Ovary (tissue), 10 donors: ENCODE measurements at regions of chr11 and their contacts with region 1.

Region 1: GRCh38 chr11:27158722-27159679 is 118.4 kb downstream of the BBOX1 start:
- DNase-seq: peak; percentile 25 to 70 (median 45)
- H3K4me3 ChIP-seq: no peak overlapping the region
- H3K27ac ChIP-seq: no peak overlapping the region
- H3K4me1 ChIP-seq: no peaks in the 10 kb centered on the region
- H3K27me3 ChIP-seq: no peaks in the 10 kb centered on the region
- CTCF ChIP-seq: peak; percentile 64 to 90 (median 89)
- EP300 ChIP-seq: no peak
- POLR2A ChIP-seq: no peak

Region 2: GRCh38 chr11:26753723-26754504 is 405.1 kb before region 1 on chr11:
- intact Hi-C with region 1: loop called (anchors 2 to 5 kb)
- DNase-seq: peak; percentile 32 to 72 (median 43)
- H3K4me3 ChIP-seq: no peak overlapping the region
- H3K27ac ChIP-seq: no peak overlapping the region
- H3K4me1 ChIP-seq: no peaks in the 10 kb centered on the region
- H3K27me3 ChIP-seq: no peaks in the 10 kb centered on the region
- CTCF ChIP-seq: peak; percentile 62 to 77 (median 65)
- EP300 ChIP-seq: no peak
- POLR2A ChIP-seq: no peak

Region 3: GRCh38 chr11:27139742-27140367 is 19.1 kb before region 1 on chr11:
- intact Hi-C with region 1: no loop called
- DNase-seq: no peak
- H3K4me3 ChIP-seq: no peak overlapping the region
- H3K27ac ChIP-seq: no peak overlapping the region
- H3K4me1 ChIP-seq: no peaks in the 10 kb centered on the region
- H3K27me3 ChIP-seq: no peaks in the 10 kb centered on the region
- CTCF ChIP-seq: no peak
- EP300 ChIP-seq: no peak
- POLR2A ChIP-seq: no peak

Region 4: DNA sequence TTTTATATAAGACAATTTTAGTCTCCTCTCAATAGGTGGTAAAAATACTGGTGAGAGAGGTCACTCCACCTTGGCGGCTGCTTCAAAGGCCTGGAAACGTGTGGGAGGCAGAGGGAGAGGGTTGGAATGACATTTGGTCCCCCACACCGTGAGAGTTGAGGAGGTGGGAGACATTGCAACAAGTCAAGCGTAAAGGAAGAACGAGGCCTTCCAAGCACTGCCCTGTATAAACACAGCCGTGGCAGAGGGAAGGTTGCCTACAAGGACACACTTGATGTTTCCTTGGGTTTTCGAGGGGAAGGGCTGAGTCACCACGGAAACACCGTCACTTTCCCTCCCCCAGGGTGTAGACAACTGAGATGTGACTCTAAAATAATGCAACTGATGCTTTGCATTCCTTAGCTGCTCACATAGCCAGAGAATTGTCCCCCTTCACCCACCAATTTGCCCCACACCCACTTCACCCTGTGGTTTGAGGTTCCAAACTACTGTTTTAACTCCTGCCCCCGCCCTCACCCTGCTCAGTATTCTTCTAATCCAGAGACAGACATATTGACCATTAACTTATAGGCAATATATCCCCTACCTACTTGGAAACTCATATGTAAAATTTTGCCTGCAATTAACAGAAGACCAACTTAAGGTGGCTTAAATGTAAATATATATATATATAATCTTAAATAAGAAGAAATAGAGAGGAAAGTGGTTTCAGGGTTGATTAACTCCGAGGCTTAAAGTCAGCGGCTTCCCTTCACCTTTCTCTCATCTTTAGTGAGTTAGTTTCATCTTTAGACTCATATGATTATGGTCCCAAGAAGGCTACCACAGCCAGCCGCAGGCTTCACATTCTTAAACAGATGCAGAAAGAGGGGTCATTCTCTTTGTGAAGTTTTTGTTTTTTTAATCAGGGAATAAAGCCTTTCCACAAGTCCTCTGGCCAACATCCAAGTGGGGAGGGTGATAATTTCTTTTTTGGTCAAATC is 595.3 kb after region 1 on chr11:
- intact Hi-C with region 1: loop called in 1 of 4 experiments (anchors 5 kb)
- DNase-seq: no peak
- H3K4me3 ChIP-seq: no peak overlapping the region
- H3K27ac ChIP-seq: no peak overlapping the region
- H3K4me1 ChIP-seq: no peaks in the 10 kb centered on the region
- H3K27me3 ChIP-seq: no peaks in the 10 kb centered on the region
- CTCF ChIP-seq: no peak
- EP300 ChIP-seq: no peak
- POLR2A ChIP-seq: no peak